Activated naive CD4-positive, alpha-beta T cell treated with anti-CD3 and anti-CD28 coated beads for 36 hours (primary cell): ENCODE measurements at regions of chr21 and their contacts with region 1.

Region 1: DNA sequence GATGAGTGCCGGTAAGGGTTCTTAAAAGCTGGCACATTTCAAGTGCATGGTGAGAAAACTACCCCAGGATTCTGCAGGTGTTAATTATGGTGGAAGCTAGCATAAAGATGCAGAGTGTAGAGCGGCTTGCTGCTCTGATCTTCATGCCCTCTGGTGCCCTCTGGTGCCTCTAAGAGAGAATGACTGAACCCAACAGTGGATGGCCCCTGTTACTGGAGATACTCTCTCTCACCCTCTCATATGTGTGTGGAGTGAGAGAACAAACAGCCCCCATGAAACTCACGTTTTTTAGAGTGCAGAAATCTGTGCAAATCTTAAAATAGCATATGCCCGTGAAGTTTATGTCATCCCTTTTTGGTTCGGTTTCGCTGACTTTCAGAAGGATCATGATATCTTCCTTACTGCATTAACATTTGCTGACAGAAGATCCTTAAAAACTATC is 90.0 kb downstream of the GRIK1 start:
- DNase-seq: peak; percentile 66
- H3K4me3 Mint-ChIP-seq: no peak overlapping the region
- H3K27ac Mint-ChIP-seq: no peak overlapping the region
- H3K4me1 Mint-ChIP-seq: no peaks in the 10 kb centered on the region
- H3K27me3 Mint-ChIP-seq: peaks cover 6% of the 10 kb centered on the region

Region 2: GRCh38 chr21:29232601-29233546 is 616.9 kb before region 1 on chr21:
- CTCF ChIA-PET with region 1: no interaction called
- intact Hi-C with region 1: no loop called
- DNase-seq: no peak
- H3K4me3 Mint-ChIP-seq: peak overlapping the region; percentile 13
- H3K27ac Mint-ChIP-seq: peak overlapping the region; percentile 79
- H3K4me1 Mint-ChIP-seq: peaks cover 53% of the 10 kb centered on the region
- H3K27me3 Mint-ChIP-seq: peaks cover 4% of the 10 kb centered on the region

Region 3: GRCh38 chr21:29360799-29361765 is 488.7 kb before region 1 on chr21:
- CTCF ChIA-PET with region 1: interaction called, 3 read pairs
- intact Hi-C with region 1: loop called (anchors 1 kb)
- DNase-seq: peak; percentile 36
- H3K4me3 Mint-ChIP-seq: no peak overlapping the region
- H3K27ac Mint-ChIP-seq: no peak overlapping the region
- H3K4me1 Mint-ChIP-seq: peaks cover 10% of the 10 kb centered on the region
- H3K27me3 Mint-ChIP-seq: no peaks in the 10 kb centered on the region

Region 4: DNA sequence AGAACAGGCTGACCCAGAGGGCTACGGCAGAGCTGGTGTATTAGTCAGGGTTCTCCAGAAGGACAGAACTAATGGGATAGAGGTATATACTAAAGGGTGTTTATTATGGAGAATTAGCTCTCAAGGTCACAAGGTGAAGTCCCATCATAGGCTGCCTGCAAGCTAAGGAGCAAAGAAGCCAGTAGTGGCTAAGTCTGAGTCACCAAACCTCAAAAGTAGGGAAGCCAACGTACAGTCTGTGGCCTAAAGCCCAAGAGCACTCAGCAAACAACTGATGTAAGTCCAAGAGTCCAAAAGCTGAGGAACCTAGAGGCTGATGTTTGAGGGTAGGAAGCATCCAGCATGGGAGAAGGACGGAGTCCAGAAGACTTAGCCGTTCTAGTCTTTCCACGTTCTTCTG is 371.8 kb before region 1 on chr21:
- CTCF ChIA-PET with region 1: interaction called, 42 read pairs
- intact Hi-C with region 1: loop called (anchors 1 kb)
- DNase-seq: no peak
- H3K4me3 Mint-ChIP-seq: no peak overlapping the region
- H3K27ac Mint-ChIP-seq: no peak overlapping the region
- H3K4me1 Mint-ChIP-seq: peaks cover 10% of the 10 kb centered on the region
- H3K27me3 Mint-ChIP-seq: no peaks in the 10 kb centered on the region

Region 5: GRCh38 chr21:29601072-29601471 is 248.7 kb before region 1 on chr21:
- CTCF ChIA-PET with region 1: no interaction called
- intact Hi-C with region 1: loop called (anchors 10 kb)
- DNase-seq: no peak
- H3K4me3 Mint-ChIP-seq: no peak overlapping the region
- H3K27ac Mint-ChIP-seq: no peak overlapping the region
- H3K4me1 Mint-ChIP-seq: no peaks in the 10 kb centered on the region
- H3K27me3 Mint-ChIP-seq: no peaks in the 10 kb centered on the region